ENCODE measurements at regions of chr5 and their contacts with region 1.

Region 1: GRCh38 chr5:103475629-103476240 is 86.9 kb downstream of the NUDT12 start:
- DNase-seq: no peak
- H3K4me3 ChIP-seq: no peak overlapping the region
- H3K27ac ChIP-seq: no peak overlapping the region
- H3K4me1 ChIP-seq: no peaks in the 10 kb centered on the region
- H3K27me3 ChIP-seq: no peaks in the 10 kb centered on the region
- CTCF ChIP-seq: peak; percentile 30 to 62 (median 46)
- EP300 ChIP-seq: no peak
- POLR2A ChIP-seq: no peak

Region 2: DNA sequence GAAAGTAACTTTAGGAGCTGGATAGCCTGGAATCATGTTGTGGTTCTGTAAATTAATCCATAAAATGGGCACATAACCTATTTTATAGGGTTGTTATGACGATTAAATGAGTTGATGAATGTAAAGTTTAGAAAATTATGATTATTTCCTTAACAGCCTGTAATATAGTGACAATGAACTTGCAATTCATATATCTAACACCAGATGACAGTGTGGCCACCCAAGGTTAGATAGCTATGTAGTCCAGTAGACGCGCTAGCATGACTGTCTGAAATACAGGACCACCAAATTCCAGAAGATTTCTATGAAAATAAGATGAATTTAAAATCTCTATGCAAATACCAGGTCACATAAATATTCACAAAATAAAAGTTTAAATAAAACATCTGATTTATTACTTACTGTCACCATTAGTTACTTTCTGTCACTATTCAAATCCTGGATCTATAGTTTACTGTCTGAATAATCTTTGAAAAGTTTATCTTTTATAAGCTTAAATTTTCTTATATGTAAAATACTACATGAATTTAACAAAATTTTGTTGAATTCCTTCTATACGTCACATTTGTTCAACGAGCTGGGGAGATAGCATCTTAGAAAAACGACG is 243.2 kb before region 1 on chr5:
- intact Hi-C with region 1: loop called (anchors 1 kb)
- DNase-seq: no peak
- H3K4me3 ChIP-seq: no peak overlapping the region
- H3K27ac ChIP-seq: no peak overlapping the region
- H3K4me1 ChIP-seq: no peaks in the 10 kb centered on the region
- H3K27me3 ChIP-seq: no peaks in the 10 kb centered on the region
- CTCF ChIP-seq: peak; percentile 68 to 89 (median 83)
- EP300 ChIP-seq: no peak
- POLR2A ChIP-seq: no peak

Measured in sigmoid colon (tissue), 7 donors.